IMR-90 (cell line): ENCODE measurements at regions of chr11 and their contacts with region 1.

Region 1: GRCh38 chr11:14463623-14464022 is 36.0 kb downstream of the COPB1 start:
- DNase-seq: no peak
- ATAC-seq: no peak
- H3K4me3 ChIP-seq: no peak overlapping the region
- H3K27ac ChIP-seq: no peak overlapping the region
- H3K4me1 ChIP-seq: no peaks in the 10 kb centered on the region
- H3K27me3 ChIP-seq: no peaks in the 10 kb centered on the region
- CTCF ChIP-seq: no peak
- POLR2A ChIP-seq: no peak
- RAD21 ChIP-seq: no peak

Region 2: DNA sequence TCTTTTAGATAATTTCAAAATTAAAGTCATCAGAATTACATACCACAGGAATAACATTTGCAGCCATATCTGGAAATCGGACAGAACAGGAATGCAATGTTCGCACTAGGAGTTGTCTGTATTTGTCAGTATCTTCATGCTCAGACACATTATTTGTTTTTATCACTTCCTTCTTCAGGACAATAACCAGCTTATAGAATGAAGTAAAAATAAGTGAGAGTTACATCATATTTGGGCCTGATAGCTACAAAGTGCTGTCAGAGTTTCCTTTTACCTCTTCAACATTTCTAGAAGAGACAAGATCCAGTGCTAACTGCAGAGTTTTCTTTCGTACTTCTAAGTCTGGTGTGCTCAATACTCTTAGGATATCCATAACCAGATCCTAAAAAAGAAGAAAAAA is 17.1 kb after region 1 on chr11:
- CTCF ChIA-PET with region 1: no interaction called
- POLR2A ChIA-PET with region 1: no interaction called
- dilution Hi-C with region 1: no loop called
- in situ Hi-C with region 1: no loop called
- intact Hi-C with region 1: loop called (anchors 2 kb)
- DNase-seq: no peak
- ATAC-seq: no peak
- H3K4me3 ChIP-seq: no peak overlapping the region
- H3K27ac ChIP-seq: no peak overlapping the region
- H3K4me1 ChIP-seq: no peaks in the 10 kb centered on the region
- H3K27me3 ChIP-seq: no peaks in the 10 kb centered on the region
- CTCF ChIP-seq: no peak
- POLR2A ChIP-seq: no peak
- RAD21 ChIP-seq: no peak

Region 3: DNA sequence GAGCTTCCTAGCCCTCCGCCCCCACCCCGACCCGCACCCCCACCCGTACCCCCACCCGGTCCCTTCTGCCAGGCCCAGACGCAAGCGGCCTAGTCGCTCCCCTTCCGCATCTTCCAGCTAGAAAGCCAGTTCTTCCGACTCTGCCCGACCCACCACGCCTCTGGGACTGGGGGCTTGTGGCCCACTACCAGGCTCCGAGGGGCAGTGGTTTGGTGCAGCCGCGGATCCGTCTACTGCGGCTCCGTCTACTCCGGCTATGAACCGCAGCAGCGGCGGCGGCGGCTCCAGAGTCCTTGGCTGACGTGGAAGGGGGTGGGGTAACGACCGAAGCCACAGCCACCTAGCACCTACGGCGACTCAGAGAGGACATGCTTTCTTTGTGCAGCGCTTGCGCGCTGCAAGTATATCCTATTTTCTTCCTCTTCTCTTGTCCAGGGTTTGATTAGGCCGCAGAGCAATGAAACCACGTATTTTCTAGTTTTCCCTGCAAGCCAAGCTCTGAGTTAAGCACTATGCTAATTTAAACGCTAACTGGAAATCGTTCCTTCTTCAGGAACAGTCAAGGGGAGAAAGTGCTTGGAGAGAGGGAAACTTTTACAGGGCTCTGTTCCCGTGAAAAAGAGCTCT is 36.0 kb after region 1 on chr11 and contains the start of gene COPB1:
- CTCF ChIA-PET with region 1: no interaction called
- POLR2A ChIA-PET with region 1: no interaction called
- dilution Hi-C with region 1: no loop called
- in situ Hi-C with region 1: loop called (anchors 5 kb)
- intact Hi-C with region 1: loop called (anchors 5 kb)
- DNase-seq: peak; percentile 95
- ATAC-seq: peak; percentile 93
- H3K4me3 ChIP-seq: peak within 1 kb of the TSS; percentile 91
- H3K27ac ChIP-seq: peak within 1 kb of the TSS; percentile 96
- H3K4me1 ChIP-seq: no peaks in the 10 kb centered on the region
- H3K27me3 ChIP-seq: no peaks in the 10 kb centered on the region
- CTCF ChIP-seq: no peak
- POLR2A ChIP-seq: peak; percentile 96
- RAD21 ChIP-seq: no peak
- total RNA-seq, gene COPB1: 341 and 415 TPM in 2 replicates